ENCODE measurements at regions of chr1 and their contacts with region 1.

Region 1: DNA sequence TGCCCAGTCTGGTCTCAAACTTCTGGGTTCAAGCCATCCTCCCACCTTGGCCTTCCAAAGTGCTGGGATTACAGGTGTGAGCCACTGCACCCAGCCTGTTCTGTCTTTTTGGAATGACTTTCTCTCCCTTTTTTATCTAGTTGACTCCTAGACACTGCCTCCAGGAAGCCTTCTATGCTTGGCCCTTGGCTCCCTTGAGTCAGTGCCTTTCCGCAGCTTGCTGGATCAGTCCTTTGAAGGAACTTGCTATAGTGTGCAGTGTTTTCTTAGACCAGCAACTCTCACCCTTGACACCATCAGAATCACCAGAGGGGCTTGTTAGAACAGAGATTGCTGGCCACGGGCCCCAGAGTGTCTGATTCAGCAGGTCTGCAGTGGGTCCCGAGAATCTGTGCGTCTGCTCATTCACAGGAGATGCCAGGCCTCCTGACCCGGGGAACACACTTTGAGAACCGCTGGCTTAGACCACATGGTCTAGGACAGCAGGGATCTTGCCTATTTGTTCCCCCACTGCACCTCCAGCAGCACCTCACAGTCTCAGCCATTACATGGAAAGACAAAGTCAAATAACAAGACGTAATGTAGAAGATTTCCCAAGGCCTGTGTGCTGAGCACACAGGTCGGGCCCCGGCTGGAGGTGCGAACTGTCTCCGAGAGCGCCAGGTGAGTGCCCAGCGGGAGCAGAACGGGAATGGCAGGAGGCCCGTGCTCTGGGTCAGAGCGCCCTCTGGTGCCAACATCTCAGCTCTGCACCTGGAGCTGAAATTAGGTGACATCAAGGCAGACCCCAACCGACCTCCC is 27.4 kb upstream of the CTPS1 start:
- DNase-seq: peak; percentile 75
- H3K4me3 Mint-ChIP-seq: no peak overlapping the region
- H3K27ac Mint-ChIP-seq: no peak overlapping the region
- H3K4me1 Mint-ChIP-seq: peaks cover 8% of the 10 kb centered on the region
- H3K27me3 Mint-ChIP-seq: no peaks in the 10 kb centered on the region
- CTCF ChIP-seq: peak; percentile 96

Region 2: GRCh38 chr1:40612345-40612831 is 339.8 kb before region 1 on chr1:
- CTCF ChIA-PET with region 1: interaction called, 5 read pairs
- POLR2A ChIA-PET with region 1: no interaction called
- intact Hi-C with region 1: loop called (anchors 1 kb)
- DNase-seq: peak; percentile 78
- H3K4me3 Mint-ChIP-seq: no peak overlapping the region
- H3K27ac Mint-ChIP-seq: no peak overlapping the region
- H3K4me1 Mint-ChIP-seq: peaks cover 12% of the 10 kb centered on the region
- H3K27me3 Mint-ChIP-seq: no peaks in the 10 kb centered on the region
- CTCF ChIP-seq: peak; percentile 89

Region 3: DNA sequence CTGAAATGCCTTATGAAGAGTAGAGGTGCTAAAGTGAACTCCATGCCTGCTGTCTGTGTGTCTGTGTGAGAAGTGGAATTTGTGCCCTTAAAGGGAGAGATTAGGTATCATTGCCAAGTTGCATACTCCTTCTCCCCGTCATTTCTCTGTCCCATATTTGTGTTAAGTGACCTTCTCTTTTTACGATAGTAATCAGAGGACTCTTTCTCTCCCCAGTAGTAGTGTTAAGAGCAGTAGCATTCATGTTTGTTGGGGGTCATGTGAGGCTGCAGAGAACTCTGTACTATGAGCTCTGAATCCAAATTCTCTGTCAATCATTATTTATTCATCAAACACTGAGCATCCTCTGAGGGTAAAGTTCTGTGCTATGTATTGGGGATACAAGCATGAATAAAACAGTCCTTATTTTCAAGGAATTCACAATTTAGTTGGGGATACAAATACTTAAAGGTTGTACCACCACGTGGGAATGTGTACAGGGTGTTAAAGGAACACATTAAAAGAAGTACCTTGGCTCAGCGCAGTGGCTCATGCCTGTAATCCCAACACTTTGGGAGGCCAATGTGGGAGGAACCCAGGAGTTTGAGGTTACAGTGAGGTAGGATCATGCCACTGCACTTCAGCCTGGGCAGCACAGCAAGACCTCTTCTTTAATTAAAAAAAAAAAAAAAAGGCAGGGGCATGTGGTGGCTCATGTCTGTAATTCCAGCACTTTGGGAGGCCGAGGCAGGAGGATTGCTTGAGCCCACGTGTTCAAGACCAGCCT is 193.4 kb before region 1 on chr1:
- CTCF ChIA-PET with region 1: no interaction called
- POLR2A ChIA-PET with region 1: no interaction called
- intact Hi-C with region 1: no loop called
- DNase-seq: no peak
- H3K4me3 Mint-ChIP-seq: no peak overlapping the region
- H3K27ac Mint-ChIP-seq: no peak overlapping the region
- H3K4me1 Mint-ChIP-seq: peaks cover 15% of the 10 kb centered on the region
- H3K27me3 Mint-ChIP-seq: no peaks in the 10 kb centered on the region
- CTCF ChIP-seq: no peak

Region 4: DNA sequence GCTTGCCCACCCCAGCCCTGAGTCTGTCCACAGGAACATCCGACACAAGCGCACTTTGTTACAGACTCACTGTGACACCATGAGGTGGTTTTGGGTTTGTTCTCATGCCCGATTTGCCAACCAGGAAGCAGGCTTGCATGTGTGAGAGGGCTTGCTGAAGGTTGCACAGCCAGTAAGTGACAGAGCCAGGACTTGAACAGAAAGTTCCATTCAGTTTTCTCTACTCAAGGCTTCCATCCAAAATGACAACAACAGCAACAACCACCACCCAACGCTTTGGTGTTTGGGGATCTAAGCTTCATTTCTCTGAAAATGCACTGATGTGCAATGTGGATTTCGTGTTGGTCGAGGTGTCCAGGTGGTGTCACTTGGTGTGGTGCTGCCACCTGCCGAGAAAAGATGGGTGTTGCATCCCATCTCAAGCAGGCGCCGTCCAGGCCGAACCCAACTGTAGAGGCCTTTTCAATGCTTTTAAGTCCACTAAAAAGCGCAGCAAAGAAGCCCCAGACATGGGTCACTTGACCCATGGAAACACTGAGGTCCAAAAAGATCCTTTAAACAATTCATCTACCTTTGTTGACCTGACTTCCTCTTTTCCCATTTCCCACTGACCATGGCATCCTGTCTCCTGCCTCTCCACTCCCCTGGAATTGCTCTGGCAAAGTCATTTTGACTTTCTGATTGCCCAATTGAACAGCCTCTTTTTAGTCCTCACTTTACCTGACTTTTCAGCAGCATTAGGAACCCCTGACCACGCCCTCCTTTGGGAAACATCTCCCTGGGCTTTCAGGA is 102.1 kb before region 1 on chr1:
- CTCF ChIA-PET with region 1: interaction called, 609 read pairs
- POLR2A ChIA-PET with region 1: interaction called, 10 read pairs
- intact Hi-C with region 1: loop called (anchors 1 kb)
- DNase-seq: peak; percentile 75
- H3K4me3 Mint-ChIP-seq: no peak overlapping the region
- H3K27ac Mint-ChIP-seq: no peak overlapping the region
- H3K4me1 Mint-ChIP-seq: peaks cover 6% of the 10 kb centered on the region
- H3K27me3 Mint-ChIP-seq: no peaks in the 10 kb centered on the region
- CTCF ChIP-seq: peak; percentile 84

Region 5: DNA sequence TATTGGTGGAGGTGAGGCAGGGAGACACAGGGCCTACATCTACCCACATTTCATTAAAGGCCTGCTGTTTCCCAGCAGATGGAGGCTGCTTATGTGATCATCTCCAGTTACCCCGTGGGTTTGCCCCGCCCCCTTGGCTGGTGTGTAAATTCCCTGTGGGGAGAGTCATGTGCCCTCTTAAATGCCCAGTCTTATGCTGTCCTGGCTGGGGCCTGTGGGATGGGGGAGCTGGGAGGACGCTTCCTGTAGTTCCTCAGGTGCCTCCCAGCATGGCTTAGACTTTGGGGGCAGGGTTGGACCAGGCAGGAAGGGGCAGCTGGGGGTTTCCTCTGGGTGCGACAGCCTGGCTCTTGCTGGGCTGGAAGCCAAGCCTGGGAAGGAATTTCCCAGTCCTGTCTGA is 74.4 kb before region 1 on chr1:
- CTCF ChIA-PET with region 1: interaction called, 11 read pairs
- POLR2A ChIA-PET with region 1: no interaction called
- intact Hi-C with region 1: no loop called
- DNase-seq: peak; percentile 96
- H3K4me3 Mint-ChIP-seq: no peak overlapping the region
- H3K27ac Mint-ChIP-seq: peak overlapping the region; percentile 97
- H3K4me1 Mint-ChIP-seq: peaks cover 44% of the 10 kb centered on the region
- H3K27me3 Mint-ChIP-seq: no peaks in the 10 kb centered on the region
- CTCF ChIP-seq: no peak

Region 6: GRCh38 chr1:40939320-40940059 is 12.7 kb before region 1 on chr1:
- CTCF ChIA-PET with region 1: interaction called, 65 read pairs
- POLR2A ChIA-PET with region 1: no interaction called
- intact Hi-C with region 1: no loop called
- DNase-seq: peak; percentile 71
- H3K4me3 Mint-ChIP-seq: no peak overlapping the region
- H3K27ac Mint-ChIP-seq: no peak overlapping the region
- H3K4me1 Mint-ChIP-seq: peaks cover 25% of the 10 kb centered on the region
- H3K27me3 Mint-ChIP-seq: no peaks in the 10 kb centered on the region
- CTCF ChIP-seq: no peak

Region 7: GRCh38 chr1:41003640-41004220 is 51.6 kb after region 1 on chr1:
- CTCF ChIA-PET with region 1: interaction called, 10 read pairs
- POLR2A ChIA-PET with region 1: interaction called, 3 read pairs
- intact Hi-C with region 1: no loop called
- DNase-seq: peak; percentile 98
- H3K4me3 Mint-ChIP-seq: no peak overlapping the region
- H3K27ac Mint-ChIP-seq: no peak overlapping the region
- H3K4me1 Mint-ChIP-seq: peaks cover 32% of the 10 kb centered on the region
- H3K27me3 Mint-ChIP-seq: no peaks in the 10 kb centered on the region
- CTCF ChIP-seq: peak; percentile 47

Measured in MCF 10A (cell line).